ENCODE measurements at regions of chr7 and their contacts with region 1.

Region 1: DNA sequence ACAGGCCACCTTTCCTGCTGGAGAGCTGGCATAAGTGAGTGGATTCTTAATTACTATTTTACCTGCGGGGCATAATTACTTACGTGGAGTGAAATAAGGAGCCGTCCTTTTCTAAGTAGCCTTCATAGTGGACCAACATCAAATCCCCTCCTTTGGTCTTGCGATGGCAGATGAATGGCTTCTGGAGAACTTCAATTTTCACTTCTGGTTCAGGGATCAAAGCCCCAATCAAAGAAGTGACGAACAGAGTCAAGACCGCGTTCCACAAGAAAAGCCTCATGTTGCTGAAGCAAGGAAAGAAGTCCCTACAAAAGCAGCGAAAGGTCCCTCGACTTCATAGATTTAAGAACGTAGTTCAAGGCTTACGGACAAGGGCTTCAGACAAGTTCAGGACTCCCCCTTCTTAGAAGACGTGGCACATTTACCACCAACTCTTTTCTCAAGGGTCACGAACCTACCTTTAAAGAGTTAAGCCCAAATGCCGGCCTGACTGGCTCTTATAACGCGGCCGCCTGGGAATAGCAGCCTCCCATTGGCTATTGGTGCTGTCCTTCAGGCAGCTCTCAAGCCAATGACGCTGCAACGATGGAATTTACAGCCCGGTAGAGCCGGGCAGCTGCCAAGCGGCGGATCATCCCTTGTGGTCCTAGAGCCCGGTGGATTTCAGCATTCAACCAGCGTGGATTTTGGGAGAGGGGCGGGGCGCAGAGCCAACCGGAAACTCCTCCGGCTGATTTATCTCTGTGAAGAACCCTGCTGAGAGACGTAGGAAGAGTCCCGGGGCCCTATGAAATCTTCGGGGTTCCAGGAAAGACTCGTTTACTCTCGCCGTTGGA is at the start of gene FKBP14:
- DNase-seq: peak; percentile 71 to 97 (median 91)
- ATAC-seq: peak; percentile 83
- H3K4me3 ChIP-seq: peak within 1 kb of the TSS; percentile 66 to 86
- H3K4me3 Mint-ChIP-seq: peak within 1 kb of the TSS; percentile 96
- H3K27ac ChIP-seq: peak within 1 kb of the TSS; percentile 65 to 70
- H3K27ac Mint-ChIP-seq: peak within 1 kb of the TSS; percentile 84
- H3K4me1 ChIP-seq: peaks cover 12% of the 10 kb centered on the region
- H3K4me1 Mint-ChIP-seq: peaks cover 46% of the 10 kb centered on the region
- H3K27me3 ChIP-seq: no peaks in the 10 kb centered on the region
- H3K27me3 Mint-ChIP-seq: no peaks in the 10 kb centered on the region
- CTCF ChIP-seq: no peak
- total RNA-seq, gene FKBP14: 5.7 to 6.1 TPM

Region 2: DNA sequence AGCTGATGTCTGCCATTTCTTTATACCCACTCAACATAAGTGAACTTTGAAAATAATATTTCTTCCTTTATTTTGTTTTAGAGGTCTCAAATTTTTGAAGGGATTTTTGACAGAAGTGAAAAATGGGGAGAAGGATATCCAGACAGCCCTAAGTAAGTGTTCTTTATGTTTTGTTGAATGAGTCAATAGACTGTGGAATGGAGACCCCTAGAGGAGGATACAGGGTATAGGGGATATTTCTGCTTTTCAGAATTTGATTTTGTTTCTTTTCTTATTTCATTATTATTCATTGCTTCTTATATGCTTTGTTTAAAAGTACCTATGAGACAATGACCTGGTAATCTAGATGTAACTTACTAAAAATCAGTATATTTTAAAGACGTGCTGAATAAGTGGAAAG is 36.1 kb after region 1 on chr7:
- CTCF ChIA-PET with region 1: interaction called, 16 read pairs
- POLR2A ChIA-PET with region 1: interaction called, 4 read pairs
- intact Hi-C with region 1: loop called in 1 of 2 experiments (anchors 2 kb)
- DNase-seq: peak in 2 of 9 experiments; percentile 33 to 51
- ATAC-seq: peak; percentile 49
- H3K4me3 ChIP-seq: no peak overlapping the region
- H3K4me3 Mint-ChIP-seq: no peak overlapping the region
- H3K27ac ChIP-seq: no peak overlapping the region
- H3K27ac Mint-ChIP-seq: no peak overlapping the region
- H3K4me1 ChIP-seq: no peaks in the 10 kb centered on the region
- H3K4me1 Mint-ChIP-seq: peaks cover 7% of the 10 kb centered on the region
- H3K27me3 ChIP-seq: no peaks in the 10 kb centered on the region
- H3K27me3 Mint-ChIP-seq: no peaks in the 10 kb centered on the region
- CTCF ChIP-seq: peak; percentile 60

Region 3: DNA sequence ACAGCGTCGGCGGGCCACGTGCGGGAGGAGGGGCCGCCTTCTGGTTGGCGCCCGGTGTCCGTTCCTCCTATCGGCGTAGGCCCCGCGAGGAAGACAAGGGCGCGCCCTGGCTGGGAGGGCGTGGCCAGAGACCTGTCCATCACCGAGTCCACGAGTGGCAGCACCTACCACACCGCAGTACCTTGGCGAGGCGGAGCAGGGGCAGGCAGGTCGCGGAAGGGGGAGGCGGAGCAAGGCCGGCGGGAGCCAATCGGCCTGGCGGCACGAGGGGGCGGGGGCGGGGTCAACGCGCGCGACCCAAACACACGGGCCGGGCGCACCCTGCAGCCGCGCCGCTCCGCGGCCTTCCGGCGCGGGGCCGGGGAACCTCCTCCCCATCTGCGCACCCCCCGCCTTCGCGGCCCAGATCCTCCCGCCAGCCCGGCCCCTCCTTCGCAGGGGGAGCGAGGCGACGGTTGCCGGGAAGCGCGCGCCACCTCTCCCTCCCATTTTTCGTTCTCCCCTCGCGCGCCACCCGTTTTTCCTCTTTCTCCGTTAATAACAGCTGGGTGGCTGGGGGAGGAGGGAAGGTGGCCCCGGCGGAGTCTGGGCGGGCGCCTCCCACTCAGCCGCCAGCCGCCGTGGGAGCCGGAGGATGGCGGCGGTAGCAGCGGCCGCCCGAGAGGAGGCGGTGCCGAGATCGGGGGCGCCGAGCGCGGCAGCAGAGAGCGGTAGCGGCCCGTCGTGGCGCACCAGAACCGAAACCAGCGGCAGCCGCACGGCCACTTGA is 258.0 kb after region 1 on chr7 and contains the start of gene ZNRF2:
- CTCF ChIA-PET with region 1: no interaction called
- POLR2A ChIA-PET with region 1: no interaction called
- intact Hi-C with region 1: loop called (anchors 1 kb)
- DNase-seq: peak; percentile 97 to 100 (median 99)
- ATAC-seq: peak; percentile 83
- H3K4me3 ChIP-seq: peak within 1 kb of the TSS; percentile 45 to 75
- H3K4me3 Mint-ChIP-seq: peak within 1 kb of the TSS; percentile 87
- H3K27ac ChIP-seq: peak within 1 kb of the TSS; percentile 76 to 80
- H3K27ac Mint-ChIP-seq: peak within 1 kb of the TSS; percentile 92
- H3K4me1 ChIP-seq: peaks cover 23% of the 10 kb centered on the region
- H3K4me1 Mint-ChIP-seq: peaks cover 40% of the 10 kb centered on the region
- H3K27me3 ChIP-seq: no peaks in the 10 kb centered on the region
- H3K27me3 Mint-ChIP-seq: no peaks in the 10 kb centered on the region
- CTCF ChIP-seq: peak; percentile 46
- total RNA-seq, gene ZNRF2: 20.1 to 26.1 TPM

Region 4: GRCh38 chr7:30504347-30505173 is 478.1 kb after region 1 on chr7 and contains the start of gene GGCT:
- CTCF ChIA-PET with region 1: no interaction called
- POLR2A ChIA-PET with region 1: no interaction called
- intact Hi-C with region 1: loop called (anchors 2 to 5 kb)
- DNase-seq: peak; percentile 90 to 98 (median 96)
- ATAC-seq: peak; percentile 97
- H3K4me3 ChIP-seq: peak within 1 kb of the TSS; percentile 80 to 98
- H3K4me3 Mint-ChIP-seq: peak within 1 kb of the TSS; percentile 95
- H3K27ac ChIP-seq: peak within 1 kb of the TSS; percentile 50 to 70
- H3K27ac Mint-ChIP-seq: peak within 1 kb of the TSS; percentile 94
- H3K4me1 ChIP-seq: peaks cover 23% of the 10 kb centered on the region
- H3K4me1 Mint-ChIP-seq: peaks cover 39% of the 10 kb centered on the region
- H3K27me3 ChIP-seq: no peaks in the 10 kb centered on the region
- H3K27me3 Mint-ChIP-seq: no peaks in the 10 kb centered on the region
- CTCF ChIP-seq: no peak
- total RNA-seq, gene GGCT: 5.9 to 6.1 TPM

Region 5: DNA sequence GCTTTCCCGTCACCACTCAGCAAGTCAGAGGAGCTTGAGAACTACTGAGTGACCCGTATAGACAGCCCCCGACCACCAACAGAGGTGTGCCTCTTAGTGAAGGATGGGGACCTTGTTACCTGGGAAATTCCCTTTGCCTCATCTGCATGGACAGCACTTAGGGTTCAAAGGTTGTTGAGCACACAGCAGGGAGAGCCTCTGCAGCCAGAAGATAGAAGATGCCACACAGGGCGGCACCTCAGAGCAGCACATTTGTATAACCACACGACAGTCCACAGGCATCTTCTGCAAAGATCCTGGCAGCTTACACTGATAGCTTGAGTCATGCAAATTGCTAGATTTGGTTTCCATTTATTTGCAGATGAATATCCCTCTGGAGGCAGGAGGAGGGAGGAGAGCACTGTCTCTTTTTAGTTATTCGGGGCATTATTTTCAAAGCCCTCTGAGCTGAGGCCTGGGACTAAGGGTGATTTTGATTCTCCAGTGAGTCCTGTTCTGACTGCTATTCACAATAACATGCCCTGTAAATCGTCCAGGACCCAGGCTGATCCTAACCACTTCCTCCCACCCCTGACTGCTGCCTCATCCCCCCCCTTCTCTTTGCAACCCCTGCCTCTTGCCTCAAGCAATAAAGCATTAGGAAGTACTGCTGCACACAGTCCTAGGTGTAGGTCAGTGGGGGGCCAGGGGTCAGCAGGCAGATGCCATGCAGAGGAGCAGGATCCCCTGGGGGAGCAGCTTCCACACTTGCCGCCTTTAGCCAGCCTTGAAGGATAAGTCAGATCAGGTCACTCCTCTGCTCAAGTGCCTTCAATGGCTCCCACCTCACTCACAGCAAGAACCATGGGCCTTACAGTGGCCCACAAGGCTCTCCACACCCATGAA is 700.9 kb after region 1 on chr7:
- CTCF ChIA-PET with region 1: no interaction called
- POLR2A ChIA-PET with region 1: no interaction called
- intact Hi-C with region 1: loop called (anchors 2 to 5 kb)
- DNase-seq: peak; percentile 21 to 83 (median 64)
- ATAC-seq: peak; percentile 91
- H3K4me3 ChIP-seq: peak overlapping the region; percentile 49 to 53
- H3K4me3 Mint-ChIP-seq: peak overlapping the region; percentile 85
- H3K27ac ChIP-seq: peak overlapping the region; percentile 55 to 68
- H3K27ac Mint-ChIP-seq: peak overlapping the region; percentile 94
- H3K4me1 ChIP-seq: peaks cover 49% of the 10 kb centered on the region
- H3K4me1 Mint-ChIP-seq: peaks cover 75% of the 10 kb centered on the region
- H3K27me3 ChIP-seq: no peaks in the 10 kb centered on the region
- H3K27me3 Mint-ChIP-seq: no peaks in the 10 kb centered on the region
- CTCF ChIP-seq: no peak

Measured in CD8-positive, alpha-beta T cell (primary cell).